AG04450 (cell line): ENCODE measurements at regions of chr1 and their contacts with region 1.

Region 1: DNA sequence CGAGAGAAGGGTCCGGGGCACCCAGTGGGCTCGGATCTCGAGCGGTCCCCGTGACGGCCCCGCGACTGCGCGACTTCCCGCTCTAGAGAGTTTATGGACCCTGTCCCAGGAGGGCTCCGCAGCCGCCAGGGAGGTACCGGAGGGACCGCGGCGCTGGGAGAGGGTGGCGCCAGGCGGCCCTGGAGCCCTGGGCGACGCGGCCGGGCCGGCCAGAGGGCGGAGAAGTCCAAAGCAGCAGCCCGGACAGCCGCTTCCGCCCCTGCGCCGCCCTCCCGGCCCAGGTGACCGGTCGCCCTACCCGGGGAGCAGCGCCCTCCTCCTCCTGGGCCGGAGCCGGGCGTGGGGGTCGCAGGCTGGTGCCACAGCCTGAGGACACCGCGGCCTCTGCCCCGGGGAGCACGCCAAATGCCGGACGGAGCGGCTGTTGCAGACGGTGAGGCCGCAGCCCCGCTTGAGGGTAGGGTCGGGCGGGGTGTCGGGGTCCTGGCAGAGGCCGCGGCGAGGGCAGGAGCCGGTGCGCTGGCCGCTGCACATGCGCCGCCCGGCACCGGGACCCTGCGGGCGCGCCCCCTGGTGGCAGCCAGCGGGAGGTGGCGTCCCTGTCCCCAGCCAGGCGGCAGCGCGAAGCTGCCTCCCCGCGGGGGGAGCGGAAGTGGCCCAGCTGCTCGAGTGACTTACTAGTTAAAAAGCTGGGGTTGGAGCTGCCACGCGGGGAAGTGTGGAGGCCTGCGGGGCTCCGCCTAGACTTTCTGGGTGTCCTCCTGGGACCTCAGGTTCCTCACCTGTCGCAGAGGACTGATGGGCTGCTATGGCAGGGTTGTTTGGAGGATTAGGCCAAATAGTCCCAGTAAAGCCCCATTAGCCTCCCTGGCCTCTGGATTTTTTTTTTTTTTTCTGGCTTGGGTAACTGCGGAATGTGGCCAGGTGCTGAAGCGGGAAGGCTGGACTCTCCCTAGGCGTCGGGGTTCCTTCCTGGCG is 20.9 kb upstream of the ZNF678 start:
- DNase-seq: peak; percentile 33
- H3K4me3 ChIP-seq: peak overlapping the region; percentile 67
- H3K27ac ChIP-seq: peak overlapping the region; percentile 70
- H3K27me3 ChIP-seq: no peaks in the 10 kb centered on the region
- CTCF ChIP-seq: peak; percentile 63

Region 2: DNA sequence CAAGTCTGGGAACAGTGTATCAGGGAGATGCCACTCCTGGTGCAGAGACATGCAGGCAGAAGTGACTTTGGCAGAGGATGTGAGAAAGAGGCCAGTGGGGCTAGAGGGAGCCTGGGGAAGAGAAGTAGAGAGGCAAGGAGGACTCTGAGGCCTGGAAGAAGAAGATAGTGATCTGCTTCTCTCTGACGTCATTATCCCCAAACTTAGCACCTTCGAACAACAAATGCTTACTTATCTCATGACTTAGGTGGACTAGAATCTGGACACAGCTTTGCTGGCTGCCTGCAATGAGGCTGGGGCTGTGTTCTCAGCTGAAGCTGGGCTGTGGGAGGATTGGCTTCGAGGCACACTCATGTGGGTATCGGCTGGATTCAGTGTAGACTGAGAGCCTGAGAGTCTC is 23.6 kb before region 1 on chr1:
- CTCF ChIA-PET with region 1: no interaction called
- POLR2A ChIA-PET with region 1: no interaction called
- DNase-seq: no peak
- H3K4me3 ChIP-seq: no peak overlapping the region
- H3K27ac ChIP-seq: no peak overlapping the region
- H3K27me3 ChIP-seq: no peaks in the 10 kb centered on the region
- CTCF ChIP-seq: no peak

Region 3: DNA sequence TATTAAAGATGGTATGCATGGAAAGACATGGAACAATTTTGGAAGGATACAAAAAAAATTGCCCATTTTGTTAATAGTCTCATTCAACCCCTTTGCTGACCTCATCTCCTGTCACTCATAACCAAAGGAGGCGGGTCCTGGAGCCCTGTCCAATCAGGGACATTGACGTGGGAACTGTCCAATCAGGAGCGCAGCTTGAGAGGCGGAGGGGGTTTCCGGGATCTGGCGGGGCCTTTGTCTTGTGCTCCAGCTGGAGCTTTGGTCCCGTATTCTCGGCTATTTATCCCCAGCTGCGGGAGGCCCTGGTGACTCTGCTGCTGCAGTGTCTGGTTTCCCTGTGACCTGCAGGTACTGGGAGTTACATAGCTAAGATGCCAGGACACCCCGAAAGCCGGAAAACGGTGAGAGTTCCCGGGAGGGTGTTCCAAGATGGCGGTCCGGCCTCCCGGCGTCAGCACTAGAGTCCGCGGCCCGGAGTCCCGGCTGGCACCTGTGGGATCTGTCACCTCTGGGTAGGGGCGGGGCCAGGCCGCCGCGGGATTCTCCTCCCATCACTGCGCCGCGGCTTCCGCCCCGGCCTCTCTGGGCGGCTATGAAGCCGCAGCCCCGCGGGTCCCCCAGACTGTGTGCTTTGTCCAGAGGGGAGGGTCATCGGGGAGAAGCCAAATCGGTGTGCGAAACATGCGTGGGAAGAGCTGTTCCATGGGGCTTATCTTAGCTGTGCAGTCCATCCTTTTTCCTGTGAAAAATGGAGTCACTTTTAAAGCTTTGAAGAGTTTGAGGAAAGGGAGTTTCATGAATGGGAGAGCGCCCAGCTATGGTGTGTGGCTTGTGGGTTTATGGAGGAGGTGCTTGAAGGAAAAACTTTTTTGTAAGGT is 21.1 kb after region 1 on chr1 and contains the start of gene ZNF678:
- CTCF ChIA-PET with region 1: interaction called, 39 read pairs
- POLR2A ChIA-PET with region 1: interaction called, 11 read pairs
- DNase-seq: peak; percentile 78
- H3K4me3 ChIP-seq: peak within 1 kb of the TSS; percentile 84
- H3K27ac ChIP-seq: peak within 1 kb of the TSS; percentile 98
- H3K27me3 ChIP-seq: peaks cover 25% of the 10 kb centered on the region
- CTCF ChIP-seq: no peak
- polyA plus RNA-seq, gene ZNF678: 2.8 and 3.7 TPM in 2 replicates